ENCODE measurements at regions of chr11 and their contacts with region 1.

Region 1: DNA sequence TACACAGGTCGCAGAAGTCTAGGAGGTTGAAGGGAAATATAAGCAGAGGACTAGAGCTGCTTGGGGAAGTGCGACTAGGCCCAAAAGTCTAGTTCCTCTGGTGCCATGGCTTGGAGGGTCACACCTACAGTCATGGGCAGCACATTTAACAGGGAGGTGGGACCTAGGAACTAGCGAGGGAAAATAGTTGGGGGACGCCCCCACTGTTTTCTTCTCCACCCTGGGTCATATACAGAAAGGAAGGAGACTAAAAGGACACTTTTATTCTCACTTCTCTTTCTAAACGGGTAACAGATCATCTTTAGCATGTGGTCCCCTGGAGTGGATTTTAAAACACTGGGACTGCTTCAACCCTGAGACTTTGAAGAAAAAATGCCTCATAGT is 16.6 kb downstream of the APIP start:
- DNase-seq: no peak
- H3K4me3 ChIP-seq: no peak overlapping the region
- CTCF ChIP-seq: no peak
- POLR2A ChIP-seq: no peak

Region 2: DNA sequence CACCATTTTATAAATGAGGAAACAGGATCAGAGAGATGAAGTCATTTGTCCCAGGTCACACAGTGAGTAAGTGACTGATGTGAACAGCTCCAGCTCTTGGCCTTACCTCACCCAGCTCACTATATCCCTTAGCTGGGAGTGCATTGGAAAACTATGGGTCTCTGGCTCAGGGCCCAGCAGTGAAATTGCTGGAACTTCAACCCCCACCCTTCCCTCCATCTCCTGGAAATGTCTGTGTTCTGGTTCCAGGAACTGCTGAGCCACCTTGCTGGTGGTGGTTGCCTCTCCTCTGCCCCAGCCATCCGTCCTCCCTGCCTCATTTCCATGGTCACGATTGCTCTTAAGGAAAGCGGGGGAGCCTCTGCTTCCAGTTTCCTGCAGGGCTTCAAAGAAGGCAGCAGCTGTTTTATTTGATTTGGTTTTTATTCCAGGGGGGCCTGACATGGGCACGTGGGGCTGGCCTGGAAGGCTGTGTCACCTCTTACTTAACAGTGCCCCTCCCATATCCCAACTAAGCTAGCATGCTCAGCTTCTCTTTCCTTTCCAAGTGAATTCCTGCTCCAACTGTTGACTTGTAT is 1692.1 kb before region 1 on chr11:
- intact Hi-C with region 1: no loop called
- DNase-seq: no peak
- H3K4me3 ChIP-seq: no peak overlapping the region
- CTCF ChIP-seq: no peak
- POLR2A ChIP-seq: no peak

Region 3: DNA sequence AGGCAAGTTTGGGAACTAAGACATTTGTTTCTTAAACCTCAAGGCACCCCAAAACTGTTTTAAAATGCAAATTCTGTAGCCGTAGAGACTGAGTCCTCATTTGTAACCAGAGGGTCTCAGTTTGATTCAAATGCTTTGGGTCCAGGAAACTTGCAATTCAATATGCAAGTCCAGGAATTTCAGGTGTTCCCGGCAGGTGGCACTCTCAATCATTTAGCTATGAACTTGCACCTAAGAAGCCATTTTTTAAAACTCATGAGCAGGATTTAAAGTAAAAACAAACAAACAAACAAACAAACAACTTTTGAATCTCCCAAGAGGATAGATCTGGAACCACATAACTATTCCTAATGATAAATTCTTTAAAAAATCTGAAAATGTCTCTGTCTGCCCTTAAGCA is 533.1 kb before region 1 on chr11:
- intact Hi-C with region 1: loop called (anchors 10 kb)
- DNase-seq: no peak
- H3K4me3 ChIP-seq: no peak overlapping the region
- CTCF ChIP-seq: no peak
- POLR2A ChIP-seq: no peak

Region 4: GRCh38 chr11:34860034-34860433 is 39.6 kb before region 1 on chr11:
- intact Hi-C with region 1: no loop called
- DNase-seq: no peak
- H3K4me3 ChIP-seq: no peak overlapping the region
- CTCF ChIP-seq: no peak
- POLR2A ChIP-seq: no peak

Region 5: GRCh38 chr11:35006389-35007128 is 106.9 kb after region 1 on chr11:
- intact Hi-C with region 1: no loop called
- DNase-seq: no peak
- H3K4me3 ChIP-seq: no peak overlapping the region
- CTCF ChIP-seq: no peak
- POLR2A ChIP-seq: no peak

Measured in lower leg skin (tissue), 4 donors.